Caco-2 (cell line): ENCODE measurements at regions of chr14 and their contacts with region 1.

Region 1: GRCh38 chr14:71166180-71166790 is 259.0 kb downstream of the PCNX1 start:
- DNase-seq: peak; percentile 67 to 69
- H3K4me3 ChIP-seq: no peak overlapping the region
- H3K4me3 Mint-ChIP-seq: peak overlapping the region; percentile 60
- H3K27ac Mint-ChIP-seq: peak overlapping the region; percentile 72
- H3K4me1 ChIP-seq: peaks cover 38% of the 10 kb centered on the region
- H3K4me1 Mint-ChIP-seq: peaks cover 35% of the 10 kb centered on the region
- H3K27me3 ChIP-seq: no peaks in the 10 kb centered on the region
- H3K27me3 Mint-ChIP-seq: no peaks in the 10 kb centered on the region
- CTCF ChIP-seq: peak; percentile 36 to 64

Region 2: DNA sequence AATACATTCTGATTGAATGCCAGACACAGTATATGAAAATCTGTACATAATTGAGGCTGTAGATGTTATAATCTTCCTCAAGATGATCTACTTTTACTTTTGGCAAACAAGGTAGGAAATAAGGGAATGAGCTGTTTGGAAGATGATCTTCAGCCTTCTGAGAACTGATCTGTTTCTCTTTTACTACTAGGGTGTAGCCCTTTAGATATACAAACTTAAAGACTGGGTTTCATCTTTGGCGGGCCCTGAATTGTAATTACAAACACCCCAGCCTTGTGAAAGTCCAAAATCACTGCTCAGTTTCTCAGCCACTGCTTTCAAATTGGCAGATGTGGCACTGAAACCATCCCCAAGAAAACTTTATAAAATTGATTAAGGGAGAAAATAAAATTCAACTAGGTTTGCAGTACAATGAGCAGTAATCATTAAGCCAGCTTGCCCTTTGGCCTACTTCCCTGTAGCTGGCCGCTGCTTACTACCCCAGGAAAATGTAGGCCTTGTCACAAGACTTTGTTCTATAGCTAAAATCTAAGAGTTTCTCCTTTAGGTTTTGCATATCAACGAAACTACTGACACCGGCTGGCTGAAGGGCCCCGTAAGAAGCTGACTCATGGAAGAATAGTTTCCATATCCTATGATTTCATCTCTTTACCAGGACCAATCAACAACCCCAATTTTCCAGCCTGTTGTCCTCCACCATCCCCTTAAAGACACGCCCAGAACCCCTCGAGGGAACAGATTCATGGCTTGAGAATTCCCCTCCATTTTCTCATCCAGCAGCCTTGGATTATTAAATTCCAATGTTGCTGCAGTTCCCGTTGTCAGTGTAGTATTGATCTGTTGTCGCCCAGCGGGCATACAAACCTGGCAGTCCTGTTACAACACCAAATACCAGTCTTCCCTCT is 48.2 kb before region 1 on chr14:
- CTCF ChIA-PET with region 1: interaction called, 4 read pairs
- POLR2A ChIA-PET with region 1: no interaction called
- intact Hi-C with region 1: loop called (anchors 1 kb)
- DNase-seq: peak in 1 of 2 experiments; percentile 61
- H3K4me3 ChIP-seq: no peak overlapping the region
- H3K4me3 Mint-ChIP-seq: peak overlapping the region; percentile 46
- H3K27ac Mint-ChIP-seq: peak overlapping the region; percentile 79
- H3K4me1 ChIP-seq: peaks cover 60% of the 10 kb centered on the region
- H3K4me1 Mint-ChIP-seq: peaks cover 38% of the 10 kb centered on the region
- H3K27me3 ChIP-seq: no peaks in the 10 kb centered on the region
- H3K27me3 Mint-ChIP-seq: no peaks in the 10 kb centered on the region
- CTCF ChIP-seq: no peak

Region 3: DNA sequence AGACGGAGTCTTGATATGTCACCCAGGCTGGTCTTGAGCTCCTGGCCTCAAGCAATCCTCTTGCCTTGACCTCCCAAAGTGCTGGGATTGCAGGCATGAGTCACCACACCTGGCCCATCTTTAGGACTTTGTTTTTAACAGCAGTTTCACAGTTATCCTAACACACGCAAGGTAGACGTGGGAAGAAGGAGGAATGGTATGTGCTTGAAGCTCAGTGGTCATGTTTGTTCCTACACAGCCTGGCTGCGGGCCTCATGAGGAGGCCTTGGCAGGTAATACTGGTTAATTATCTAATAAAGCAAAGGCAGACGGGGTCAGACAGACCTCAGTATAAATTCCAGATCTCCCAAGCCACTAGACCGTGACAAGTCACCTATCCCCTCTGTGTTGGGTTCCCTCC is 12.8 kb after region 1 on chr14:
- CTCF ChIA-PET with region 1: no interaction called
- POLR2A ChIA-PET with region 1: no interaction called
- intact Hi-C with region 1: no loop called
- DNase-seq: no peak
- H3K4me3 ChIP-seq: no peak overlapping the region
- H3K4me3 Mint-ChIP-seq: no peak overlapping the region
- H3K27ac Mint-ChIP-seq: no peak overlapping the region
- H3K4me1 ChIP-seq: no peaks in the 10 kb centered on the region
- H3K4me1 Mint-ChIP-seq: peaks cover 7% of the 10 kb centered on the region
- H3K27me3 ChIP-seq: no peaks in the 10 kb centered on the region
- H3K27me3 Mint-ChIP-seq: no peaks in the 10 kb centered on the region
- CTCF ChIP-seq: no peak

Region 4: GRCh38 chr14:71221119-71221518 is 54.8 kb after region 1 on chr14:
- CTCF ChIA-PET with region 1: no interaction called
- POLR2A ChIA-PET with region 1: no interaction called
- intact Hi-C with region 1: loop called (anchors 5 kb)
- DNase-seq: no peak
- H3K4me3 ChIP-seq: no peak overlapping the region
- H3K4me3 Mint-ChIP-seq: no peak overlapping the region
- H3K27ac Mint-ChIP-seq: no peak overlapping the region
- H3K4me1 ChIP-seq: no peaks in the 10 kb centered on the region
- H3K4me1 Mint-ChIP-seq: no peaks in the 10 kb centered on the region
- H3K27me3 ChIP-seq: no peaks in the 10 kb centered on the region
- H3K27me3 Mint-ChIP-seq: no peaks in the 10 kb centered on the region
- CTCF ChIP-seq: no peak

Region 5: DNA sequence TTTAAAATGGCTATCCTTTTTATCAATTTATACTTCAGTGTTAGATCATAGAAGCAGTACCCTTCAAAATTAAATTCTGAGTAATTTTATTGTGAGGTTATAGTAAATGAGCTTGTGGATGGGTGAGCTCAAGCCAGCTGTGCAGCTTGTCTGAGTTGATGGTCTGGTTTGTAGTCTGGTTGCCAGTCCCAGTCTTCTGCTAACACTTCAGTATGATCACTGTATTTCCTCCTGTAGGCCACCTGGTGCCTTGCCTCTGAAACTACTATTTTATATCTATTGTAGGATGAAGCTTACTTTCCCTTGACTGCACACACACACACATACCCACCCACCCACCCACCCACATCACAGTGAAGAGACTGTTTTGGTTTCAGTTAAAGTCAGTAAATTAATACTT is 237.4 kb after region 1 on chr14:
- CTCF ChIA-PET with region 1: interaction called, 9 read pairs
- POLR2A ChIA-PET with region 1: no interaction called
- intact Hi-C with region 1: loop called (anchors 10 kb)
- DNase-seq: peak; percentile 39 to 47
- H3K4me3 ChIP-seq: no peak overlapping the region
- H3K4me3 Mint-ChIP-seq: no peak overlapping the region
- H3K27ac Mint-ChIP-seq: no peak overlapping the region
- H3K4me1 ChIP-seq: peaks cover 11% of the 10 kb centered on the region; the same call in 1 of the 2 replicates
- H3K4me1 Mint-ChIP-seq: peaks cover 10% of the 10 kb centered on the region
- H3K27me3 ChIP-seq: no peaks in the 10 kb centered on the region
- H3K27me3 Mint-ChIP-seq: no peaks in the 10 kb centered on the region
- CTCF ChIP-seq: peak; percentile 23 to 46